Activated T-helper 1 cell treated with anti-CD3 and anti-CD28 coated beads, Interleukin-12 subunit alpha, Interleukin-12 subunit beta, Interleukin-2, Interleukin-4 antibody, amounts not matched to agents 30 ng/mL and 10 ng/mL and 1 ng/mL, durations not matched to agents 14 hours and 24 hours and 36 hours (primary cell): ENCODE measurements at regions of chr20 and their contacts with region 1.

Region 1: DNA sequence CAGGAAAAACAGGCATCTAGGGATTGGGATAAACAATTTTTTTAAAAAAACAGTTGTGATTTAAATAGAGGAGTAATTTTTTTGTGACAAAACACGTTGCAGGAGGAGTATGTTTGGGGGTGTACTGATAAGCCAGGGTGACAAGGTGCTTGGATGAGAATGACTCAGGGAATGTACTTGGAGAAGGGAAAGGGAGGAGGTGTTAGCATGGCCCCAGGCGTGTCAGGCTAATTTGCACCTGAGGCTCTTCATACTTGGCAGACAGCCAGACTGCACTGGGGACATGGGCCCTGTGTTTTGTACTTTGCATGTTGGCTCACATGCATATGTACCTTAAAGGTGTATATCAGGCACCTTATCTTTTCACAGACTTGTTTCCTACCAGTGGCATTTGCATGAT is 22.8 kb downstream of the PANK2 start:
- DNase-seq: no peak
- H3K4me3 Mint-ChIP-seq: no peak overlapping the region
- H3K27ac Mint-ChIP-seq: no peak overlapping the region
- H3K4me1 Mint-ChIP-seq: peaks cover 56% of the 10 kb centered on the region
- H3K27me3 Mint-ChIP-seq: no peaks in the 10 kb centered on the region

Region 2: GRCh38 chr20:3795511-3796468 is 116.2 kb before region 1 on chr20 and contains the start of gene CDC25B:
- intact Hi-C with region 1: loop called (anchors 2 kb)
- DNase-seq: peak; percentile 81
- H3K4me3 Mint-ChIP-seq: peak within 1 kb of the TSS; percentile 93
- H3K27ac Mint-ChIP-seq: peak within 1 kb of the TSS; percentile 96
- H3K4me1 Mint-ChIP-seq: peaks cover 47% of the 10 kb centered on the region
- H3K27me3 Mint-ChIP-seq: no peaks in the 10 kb centered on the region
- total RNA-seq, gene CDC25B: 71.7 and 76.2 TPM in 2 replicates

Region 3: GRCh38 chr20:3924304-3925112 is 12.6 kb after region 1 on chr20:
- intact Hi-C with region 1: loop called (anchors 2 kb)
- DNase-seq: no peak
- H3K4me3 Mint-ChIP-seq: no peak overlapping the region
- H3K27ac Mint-ChIP-seq: peak overlapping the region; percentile 63
- H3K4me1 Mint-ChIP-seq: peaks cover 53% of the 10 kb centered on the region
- H3K27me3 Mint-ChIP-seq: no peaks in the 10 kb centered on the region

Region 4: GRCh38 chr20:3995067-3995748 is 83.3 kb after region 1 on chr20:
- intact Hi-C with region 1: loop called (anchors 1 kb)
- DNase-seq: no peak
- H3K4me3 Mint-ChIP-seq: peak overlapping the region; percentile 55
- H3K27ac Mint-ChIP-seq: peak overlapping the region; percentile 90
- H3K4me1 Mint-ChIP-seq: peaks cover 57% of the 10 kb centered on the region
- H3K27me3 Mint-ChIP-seq: no peaks in the 10 kb centered on the region

Region 5: DNA sequence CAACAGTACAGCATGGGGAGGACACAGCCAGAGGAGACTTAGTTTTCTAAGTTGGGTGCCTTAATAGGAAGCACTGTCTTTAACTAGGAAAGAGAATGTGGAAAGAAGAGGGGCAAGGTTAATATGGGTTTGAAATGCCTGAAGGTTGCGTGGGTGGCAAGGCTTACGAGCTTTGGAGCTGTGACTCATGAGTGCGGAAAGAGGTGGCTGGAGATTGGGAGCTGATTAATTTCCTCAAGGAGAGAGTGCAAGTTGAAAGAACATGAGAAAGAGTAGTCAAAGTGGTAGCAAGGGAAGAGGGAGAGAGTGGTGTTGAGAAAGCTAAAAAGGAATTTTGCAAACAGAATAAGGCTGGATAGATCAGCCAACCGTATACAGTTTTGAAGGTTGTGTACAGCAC is 494.7 kb after region 1 on chr20:
- intact Hi-C with region 1: no loop called
- DNase-seq: no peak
- H3K4me3 Mint-ChIP-seq: no peak overlapping the region
- H3K27ac Mint-ChIP-seq: no peak overlapping the region
- H3K4me1 Mint-ChIP-seq: no peaks in the 10 kb centered on the region
- H3K27me3 Mint-ChIP-seq: peaks cover 2% of the 10 kb centered on the region